ENCODE measurements at regions of chr1 and their contacts with region 1.

Region 1: GRCh38 chr1:169106095-169106920 is at the start of gene ATP1B1:
- DNase-seq: peak; percentile 80 to 89
- ATAC-seq: peak; percentile 76 to 91 (median 86)
- H3K4me3 ChIP-seq: peak within 1 kb of the TSS; percentile 66 to 98 (median 91)
- H3K27ac ChIP-seq: peak within 1 kb of the TSS; percentile 86 to 98 (median 94)
- H3K4me1 ChIP-seq: peaks cover 0 to 63% (median 28%) of the 10 kb centered on the region in 9 donors
- H3K27me3 ChIP-seq: peaks cover 0 to 12% (median 0%) of the 10 kb centered on the region in 7 donors
- CTCF ChIP-seq: peak; percentile 44 to 80 (median 66)
- total RNA-seq, gene ATP1B1: 245 to 472 (median 272) TPM

Region 2: DNA sequence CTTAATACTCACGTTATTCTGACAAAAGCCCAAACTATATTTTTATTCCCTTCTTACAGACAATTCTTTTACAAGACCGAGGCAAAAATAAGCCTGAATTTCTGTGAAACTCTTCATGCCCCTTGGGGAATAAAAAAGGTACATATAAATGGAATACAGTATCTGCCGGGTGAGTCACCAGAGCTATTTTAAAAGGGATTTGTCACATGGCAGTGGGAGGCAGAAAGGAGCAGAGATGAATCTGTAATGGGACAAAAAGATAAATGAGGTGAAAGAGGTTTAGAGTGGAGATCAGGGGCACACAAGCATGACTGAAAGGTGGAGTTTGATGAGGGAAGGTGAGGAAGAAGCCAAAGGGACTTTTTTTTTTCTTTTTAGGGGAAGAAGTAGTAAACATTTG is 521.1 kb before region 1 on chr1:
- intact Hi-C with region 1: no loop called
- DNase-seq: peak in 1 of 2 donors; percentile 17
- ATAC-seq: peak in 5 of 8 donors; percentile 58 to 85 (median 70)
- H3K4me3 ChIP-seq: no peak overlapping the region
- H3K27ac ChIP-seq: peak overlapping the region in 3 of 10 donors; percentile 22 to 32 (median 26)
- H3K4me1 ChIP-seq: peaks cover 0 to 16% (median 4%) of the 10 kb centered on the region in 9 donors
- H3K27me3 ChIP-seq: no peaks in the 10 kb centered on the region
- CTCF ChIP-seq: no peak

Region 3: GRCh38 chr1:168637350-168637991 is 468.8 kb before region 1 on chr1:
- intact Hi-C with region 1: loop called in 3 of 10 experiments (anchors 5 kb)
- DNase-seq: no peak
- ATAC-seq: peak in 7 of 8 donors; percentile 29 to 65 (median 47)
- H3K4me3 ChIP-seq: no peak overlapping the region
- H3K27ac ChIP-seq: peak overlapping the region in 8 of 10 donors; percentile 36 to 66 (median 48)
- H3K4me1 ChIP-seq: peaks cover 0 to 14% (median 0%) of the 10 kb centered on the region in 9 donors
- H3K27me3 ChIP-seq: no peaks in the 10 kb centered on the region
- CTCF ChIP-seq: peak; percentile 36 to 69 (median 58)

Region 4: DNA sequence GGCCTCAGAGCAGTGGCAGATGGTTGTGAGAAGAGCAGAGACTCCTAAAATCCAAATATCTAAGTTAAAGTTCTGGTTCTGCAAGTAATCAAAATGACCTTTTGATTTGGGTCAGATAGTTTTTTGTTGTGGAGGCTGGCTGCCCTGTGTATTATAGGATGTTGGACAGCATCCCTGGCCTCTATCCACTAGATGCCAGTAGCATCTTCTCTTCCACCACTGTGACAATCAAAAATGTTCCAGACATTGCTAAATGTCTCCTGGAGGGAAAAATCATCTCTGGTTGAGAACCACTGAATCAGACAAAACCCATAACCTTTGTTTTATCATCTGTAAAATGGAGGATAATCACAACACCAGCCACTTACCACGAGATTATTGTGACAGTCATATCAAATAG is 371.4 kb before region 1 on chr1:
- intact Hi-C with region 1: loop called in 1 of 10 experiments (anchors 5 kb)
- DNase-seq: no peak
- ATAC-seq: peak in 2 of 8 donors; percentile 50 to 62
- H3K4me3 ChIP-seq: no peak overlapping the region
- H3K27ac ChIP-seq: peak overlapping the region in 2 of 10 donors; percentile 16 to 25
- H3K4me1 ChIP-seq: peaks cover 2 to 25% (median 16%) of the 10 kb centered on the region in 9 donors
- H3K27me3 ChIP-seq: no peaks in the 10 kb centered on the region
- CTCF ChIP-seq: peak in 6 of 9 donors; percentile 13 to 36 (median 26)

Region 5: GRCh38 chr1:168834225-168834872 is 272.0 kb before region 1 on chr1:
- intact Hi-C with region 1: loop called in 2 of 10 experiments (anchors 5 to 10 kb)
- DNase-seq: no peak
- ATAC-seq: peak in 6 of 8 donors; percentile 23 to 68 (median 62)
- H3K4me3 ChIP-seq: no peak overlapping the region
- H3K27ac ChIP-seq: peak overlapping the region in 5 of 10 donors; percentile 17 to 61 (median 50)
- H3K4me1 ChIP-seq: peaks cover 0 to 37% (median 18%) of the 10 kb centered on the region in 9 donors
- H3K27me3 ChIP-seq: no peaks in the 10 kb centered on the region
- CTCF ChIP-seq: no peak

Region 6: DNA sequence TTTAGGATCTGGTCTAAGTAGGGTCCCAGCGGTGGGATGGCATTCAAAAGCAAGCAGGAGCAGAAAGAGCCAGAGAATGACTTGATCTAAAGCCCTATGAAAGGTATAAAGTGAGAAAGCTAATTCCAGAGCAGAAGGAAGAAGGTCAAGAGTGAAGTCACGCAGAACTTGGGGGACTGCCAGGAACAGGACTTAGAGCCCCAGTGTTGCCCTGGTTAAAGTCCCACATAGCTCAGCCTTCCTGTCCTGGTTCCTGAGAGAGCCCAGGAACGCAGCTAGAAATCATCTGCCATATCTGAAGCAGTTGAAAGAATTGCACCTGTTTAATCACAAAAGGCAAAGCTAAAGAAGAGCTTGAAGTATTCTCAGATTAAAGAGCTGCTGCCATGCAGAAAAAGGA is 160.4 kb before region 1 on chr1:
- intact Hi-C with region 1: loop called in 1 of 10 experiments (anchors 10 kb)
- DNase-seq: peak; percentile 43 to 63
- ATAC-seq: peak; percentile 66 to 98 (median 90)
- H3K4me3 ChIP-seq: no peak overlapping the region
- H3K27ac ChIP-seq: peak overlapping the region in 7 of 10 donors; percentile 13 to 65 (median 57)
- H3K4me1 ChIP-seq: peaks cover 4 to 16% (median 11%) of the 10 kb centered on the region in 9 donors
- H3K27me3 ChIP-seq: no peaks in the 10 kb centered on the region
- CTCF ChIP-seq: no peak

Region 7: GRCh38 chr1:169161496-169162194 is 55.3 kb after region 1 on chr1:
- intact Hi-C with region 1: no loop called
- DNase-seq: no peak
- ATAC-seq: peak in 2 of 8 donors; percentile 43 to 59
- H3K4me3 ChIP-seq: no peak overlapping the region
- H3K27ac ChIP-seq: no peak overlapping the region
- H3K4me1 ChIP-seq: peaks cover 0 to 11% (median 5%) of the 10 kb centered on the region in 9 donors
- H3K27me3 ChIP-seq: no peaks in the 10 kb centered on the region
- CTCF ChIP-seq: no peak

Region 8: GRCh38 chr1:169235568-169235967 is 129.3 kb after region 1 on chr1:
- intact Hi-C with region 1: no loop called
- DNase-seq: no peak
- ATAC-seq: no peak
- H3K4me3 ChIP-seq: no peak overlapping the region
- H3K27ac ChIP-seq: peak overlapping the region in 1 of 10 donors; percentile 32
- H3K4me1 ChIP-seq: peaks cover 0 to 37% (median 18%) of the 10 kb centered on the region in 9 donors
- H3K27me3 ChIP-seq: no peaks in the 10 kb centered on the region
- CTCF ChIP-seq: no peak

Region 9: GRCh38 chr1:169348383-169349036 is 242.2 kb after region 1 on chr1:
- intact Hi-C with region 1: loop called in 1 of 10 experiments (anchors 10 kb)
- DNase-seq: peak in 1 of 2 donors; percentile 19
- ATAC-seq: no peak
- H3K4me3 ChIP-seq: no peak overlapping the region
- H3K27ac ChIP-seq: no peak overlapping the region
- H3K4me1 ChIP-seq: no peaks in the 10 kb centered on the region
- H3K27me3 ChIP-seq: no peaks in the 10 kb centered on the region
- CTCF ChIP-seq: peak; percentile 73 to 91 (median 81)

Measured in heart right ventricle (tissue), 16 donors.